ENCODE measurements at regions of chr11 and their contacts with region 1.

Region 1: DNA sequence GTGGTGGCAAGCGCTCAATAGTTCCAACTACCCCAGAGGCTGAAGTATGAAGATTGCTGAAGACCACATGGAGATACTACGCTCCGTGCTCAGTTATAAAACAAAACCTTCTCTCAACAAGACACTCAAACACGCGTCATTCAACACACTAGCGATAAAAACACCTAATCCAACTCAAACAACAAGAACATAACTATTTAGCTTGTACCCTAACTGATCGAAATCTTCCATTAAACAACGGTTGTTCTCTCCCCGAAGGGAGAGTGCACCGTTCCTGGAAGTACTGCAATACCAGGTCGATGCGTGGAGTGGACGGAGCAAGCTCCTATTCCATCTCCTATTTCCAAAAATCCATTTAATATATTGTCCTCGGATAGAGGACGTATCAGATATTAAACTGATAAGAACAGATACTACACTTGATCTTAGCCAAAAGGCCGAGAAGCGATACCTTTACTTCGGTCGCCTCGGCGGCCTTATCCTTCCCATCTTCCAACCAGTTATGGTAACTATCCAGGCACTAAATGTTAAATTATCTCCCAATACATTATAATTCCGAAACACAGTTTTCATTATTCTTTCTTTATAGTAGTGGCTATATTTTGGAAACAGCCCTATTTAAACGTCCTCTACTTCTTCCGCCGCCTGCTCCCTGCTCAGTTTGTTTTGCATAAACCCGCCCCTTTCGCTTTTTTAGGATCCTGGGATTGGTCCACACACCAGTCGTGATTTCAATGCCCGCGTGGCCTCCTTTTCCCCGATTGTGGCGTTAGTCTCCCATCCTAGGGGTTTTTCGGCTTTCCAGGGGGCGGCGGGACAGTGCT is 2.2 kb upstream of the WDR74 start:
- DNase-seq: peak; percentile 98
- ATAC-seq: peak; percentile 78
- H3K4me3 ChIP-seq: peak overlapping the region; percentile 85 to 100 (median 97)
- H3K27ac ChIP-seq: peak overlapping the region; percentile 98
- H3K4me1 ChIP-seq: peaks cover 43% of the 10 kb centered on the region
- H3K27me3 ChIP-seq: no peaks in the 10 kb centered on the region; a peak in 1 of 5 replicates
- CTCF ChIP-seq: peak; percentile 39
- EP300 ChIP-seq: peak in 1 of 2 experiments; percentile 74; a peak in 2 of 4 replicates
- POLR2A ChIP-seq: peak; percentile 99 to 100
- RAD21 ChIP-seq: peak; percentile 82

Region 2: DNA sequence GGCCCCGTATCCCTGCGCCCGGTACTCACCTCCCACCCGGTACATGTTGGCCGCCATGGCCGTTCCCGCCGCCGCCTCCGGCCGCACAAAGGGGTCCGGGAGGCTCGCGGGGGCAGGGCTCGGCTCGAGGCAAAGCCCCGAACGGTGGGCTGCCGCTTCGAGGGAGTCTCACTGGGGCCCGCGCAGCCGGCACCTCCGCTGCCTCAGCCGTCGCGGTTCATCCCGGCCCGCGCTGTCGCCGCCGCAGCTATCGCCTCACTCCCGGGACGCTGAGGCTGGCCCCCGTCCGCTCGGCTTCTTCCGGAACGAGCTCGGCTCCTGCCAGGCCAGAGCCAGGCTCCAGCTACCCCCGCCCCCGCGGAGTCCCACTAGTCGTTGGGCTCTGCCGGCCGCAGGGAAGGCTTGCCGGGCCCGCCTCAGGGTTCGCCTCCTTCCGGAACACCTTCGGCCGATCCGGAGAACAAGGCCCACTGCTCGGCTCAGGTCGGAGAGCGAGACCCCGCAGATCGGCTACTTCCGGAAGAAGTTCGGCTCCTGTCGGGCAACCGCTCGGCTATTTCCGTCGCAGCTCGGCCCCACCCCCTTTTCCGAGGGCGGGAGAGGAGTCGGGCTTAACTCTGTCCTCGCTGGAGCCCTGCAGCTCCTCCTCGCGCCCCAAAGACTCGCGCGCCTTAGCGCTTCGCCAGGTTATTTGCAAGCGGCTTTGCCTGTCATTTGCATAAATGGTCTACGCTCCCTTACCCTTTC is 240.0 kb before region 1 on chr11 and contains the start of gene MTA2:
- CTCF ChIA-PET with region 1: no interaction called
- POLR2A ChIA-PET with region 1: interaction called, 10 read pairs
- in situ Hi-C with region 1: no loop called
- intact Hi-C with region 1: no loop called
- DNase-seq: peak; percentile 94
- ATAC-seq: peak; percentile 93
- H3K4me3 ChIP-seq: peak within 1 kb of the TSS; percentile 91 to 94 (median 94)
- H3K27ac ChIP-seq: peak within 1 kb of the TSS; percentile 88
- H3K4me1 ChIP-seq: peaks cover 43% of the 10 kb centered on the region
- H3K27me3 ChIP-seq: no peaks in the 10 kb centered on the region; a peak in 1 of 5 replicates
- CTCF ChIP-seq: 0 out of 2 replicates have a peak, but pooled peaks have one; percentile 2
- EP300 ChIP-seq: no peak
- POLR2A ChIP-seq: peak in 1 of 2 experiments; percentile 72; a peak in 2 of 4 replicates
- RAD21 ChIP-seq: no peak
- total RNA-seq, gene MTA2: 58.1 and 70.0 TPM in 2 replicates

Region 3: GRCh38 chr11:62678770-62679696 is 162.5 kb before region 1 on chr11 and contains the start of gene UBXN1:
- CTCF ChIA-PET with region 1: no interaction called
- POLR2A ChIA-PET with region 1: interaction called, 19 read pairs
- in situ Hi-C with region 1: no loop called
- intact Hi-C with region 1: no loop called
- DNase-seq: peak; percentile 79
- ATAC-seq: peak; percentile 79
- H3K4me3 ChIP-seq: peak within 1 kb of the TSS; percentile 88 to 98 (median 94)
- H3K27ac ChIP-seq: peak within 1 kb of the TSS; percentile 86
- H3K4me1 ChIP-seq: peaks cover 37% of the 10 kb centered on the region
- H3K27me3 ChIP-seq: no peaks in the 10 kb centered on the region
- CTCF ChIP-seq: no peak
- EP300 ChIP-seq: no peak
- POLR2A ChIP-seq: peak; percentile 72 to 79
- RAD21 ChIP-seq: no peak; the same call in 1 of the 2 replicates
- total RNA-seq, gene UBXN1: 52.4 and 58.9 TPM in 2 replicates

Region 4: GRCh38 chr11:62787005-62787759 is 54.4 kb before region 1 on chr11 and contains the start of gene TMEM179B:
- CTCF ChIA-PET with region 1: no interaction called
- POLR2A ChIA-PET with region 1: interaction called, 201 read pairs
- in situ Hi-C with region 1: no loop called
- intact Hi-C with region 1: loop called (anchors 2 kb)
- DNase-seq: peak; percentile 96
- ATAC-seq: peak; percentile 77
- H3K4me3 ChIP-seq: peak within 1 kb of the TSS; percentile 65 to 88 (median 81)
- H3K27ac ChIP-seq: peak within 1 kb of the TSS; percentile 79
- H3K4me1 ChIP-seq: peaks cover 45% of the 10 kb centered on the region
- H3K27me3 ChIP-seq: no peaks in the 10 kb centered on the region; a peak in 1 of 5 replicates
- CTCF ChIP-seq: peak; percentile 79
- EP300 ChIP-seq: no peak; a peak in 1 of 4 replicates
- POLR2A ChIP-seq: peak; percentile 91 to 98
- RAD21 ChIP-seq: no peak
- total RNA-seq, gene TMEM179B: 11.4 and 24.8 TPM in 2 replicates

Region 5: DNA sequence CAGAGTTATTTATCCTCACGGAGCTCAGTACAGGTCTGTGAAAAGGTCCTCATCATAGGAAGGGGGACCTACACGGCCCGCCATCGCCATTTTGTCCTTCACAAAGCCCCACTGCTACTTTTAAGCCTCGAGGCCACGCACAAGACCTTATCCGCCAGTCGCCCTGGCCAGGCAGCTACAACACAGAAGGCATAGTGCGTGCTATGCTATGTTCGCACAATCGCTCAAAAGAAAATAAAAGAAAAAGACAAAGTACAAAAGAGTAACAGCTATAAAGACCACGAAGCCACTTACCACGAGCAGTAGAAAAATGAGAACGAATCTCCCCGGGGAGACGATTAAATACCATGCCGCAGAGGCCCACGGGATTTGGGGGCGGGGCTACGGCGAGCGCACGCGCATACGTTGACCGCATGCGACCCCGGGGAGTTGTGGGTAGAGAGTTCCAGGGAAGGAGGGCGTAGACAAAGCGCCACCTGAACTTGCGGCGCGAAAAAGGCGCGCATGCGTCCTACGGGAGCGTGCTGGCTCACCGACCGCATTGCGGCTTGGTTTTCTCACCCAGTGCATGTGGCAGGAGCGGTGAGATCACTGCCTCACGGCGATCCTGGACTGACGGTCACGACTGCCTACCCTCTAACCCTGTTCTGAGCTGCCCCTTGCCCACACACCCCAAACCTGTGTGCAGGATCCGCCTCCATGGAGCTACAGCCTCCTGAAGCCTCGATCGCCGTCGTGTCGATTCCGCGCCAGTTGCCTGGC is 14.2 kb after region 1 on chr11:
- CTCF ChIA-PET with region 1: no interaction called
- POLR2A ChIA-PET with region 1: interaction called, 362 read pairs
- in situ Hi-C with region 1: no loop called
- intact Hi-C with region 1: no loop called
- DNase-seq: peak; percentile 97
- ATAC-seq: peak; percentile 79
- H3K4me3 ChIP-seq: peak overlapping the region; percentile 86 to 96 (median 94)
- H3K27ac ChIP-seq: peak overlapping the region; percentile 91
- H3K4me1 ChIP-seq: peaks cover 77% of the 10 kb centered on the region
- H3K27me3 ChIP-seq: no peaks in the 10 kb centered on the region; a peak in 1 of 5 replicates
- CTCF ChIP-seq: peak; percentile 23; the same call in 1 of the 2 replicates
- EP300 ChIP-seq: 0 out of 4 replicates have a peak, but pooled peaks of 1 of the 2 experiments have one; percentile 8
- POLR2A ChIP-seq: peak; percentile 99 to 100
- RAD21 ChIP-seq: peak; percentile 16; the same call in 1 of the 2 replicates

Region 6: DNA sequence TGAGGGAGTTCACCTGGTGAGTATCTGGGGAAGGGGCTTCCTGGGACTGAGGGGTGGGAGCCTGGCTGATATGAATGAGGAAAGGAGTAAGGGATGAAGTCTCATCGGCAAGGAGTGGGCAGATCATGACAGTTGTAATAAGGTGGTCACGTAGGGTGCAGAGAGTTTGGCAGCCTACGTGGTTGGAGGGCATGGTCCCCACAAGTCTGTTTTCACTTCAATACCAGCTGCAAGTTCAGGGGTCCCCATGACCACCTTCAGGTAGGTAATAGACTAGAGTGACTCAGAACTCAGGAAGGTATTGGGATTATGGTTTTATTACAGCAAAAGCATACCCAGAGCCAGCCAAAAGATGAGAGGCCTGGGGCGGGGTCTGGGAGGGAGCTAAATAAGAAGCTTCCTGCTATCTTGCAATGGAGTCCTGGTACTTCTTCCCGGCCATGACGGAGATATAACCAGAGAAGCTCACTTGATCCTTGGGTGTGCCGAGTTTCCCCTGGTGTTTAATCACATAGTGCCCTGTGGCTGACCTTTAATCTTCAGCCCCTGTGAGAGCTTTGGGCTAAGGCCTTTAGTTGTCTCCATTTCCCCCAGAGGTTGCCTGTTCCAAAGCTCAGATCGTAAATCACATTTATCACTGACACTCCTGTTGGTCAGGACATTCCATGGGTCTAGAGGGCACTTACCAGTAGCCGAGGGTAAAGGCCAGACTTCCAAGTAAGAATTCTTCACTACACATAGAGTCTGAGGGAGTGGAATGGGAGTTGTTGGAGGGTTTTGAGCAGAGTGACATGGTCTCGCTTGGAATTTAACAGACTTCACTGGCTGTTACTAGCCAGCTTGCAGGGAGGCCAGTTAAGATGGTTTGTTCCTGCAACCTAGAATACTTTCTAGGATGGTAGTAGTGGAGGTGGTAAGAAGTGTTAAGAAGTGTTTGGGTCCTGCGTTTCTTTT is 48.2 kb after region 1 on chr11:
- CTCF ChIA-PET with region 1: no interaction called
- POLR2A ChIA-PET with region 1: interaction called, 90 read pairs
- in situ Hi-C with region 1: no loop called
- intact Hi-C with region 1: no loop called
- DNase-seq: peak; percentile 79
- ATAC-seq: peak; percentile 59
- H3K4me3 ChIP-seq: no peak overlapping the region
- H3K27ac ChIP-seq: peak overlapping the region; percentile 66
- H3K4me1 ChIP-seq: peaks cover 81% of the 10 kb centered on the region
- H3K27me3 ChIP-seq: no peaks in the 10 kb centered on the region
- CTCF ChIP-seq: no peak
- EP300 ChIP-seq: peak in 1 of 2 experiments; percentile 59; a peak in 1 of 4 replicates
- POLR2A ChIP-seq: peak; percentile 53 to 66; a peak in 3 of 4 replicates
- RAD21 ChIP-seq: no peak; the same call in 1 of the 2 replicates

Region 7: GRCh38 chr11:63032457-63032856 is 190.9 kb after region 1 on chr11:
- CTCF ChIA-PET with region 1: no interaction called
- POLR2A ChIA-PET with region 1: no interaction called
- in situ Hi-C with region 1: no loop called
- intact Hi-C with region 1: no loop called
- DNase-seq: no peak
- ATAC-seq: no peak
- H3K4me3 ChIP-seq: no peak overlapping the region
- H3K27ac ChIP-seq: no peak overlapping the region
- H3K4me1 ChIP-seq: peaks cover 7% of the 10 kb centered on the region; the same call in 1 of the 2 replicates
- H3K27me3 ChIP-seq: no peaks in the 10 kb centered on the region
- CTCF ChIP-seq: no peak
- EP300 ChIP-seq: no peak
- POLR2A ChIP-seq: no peak
- RAD21 ChIP-seq: no peak

Region 8: GRCh38 chr11:63427971-63428508 is 586.5 kb after region 1 on chr11:
- CTCF ChIA-PET with region 1: no interaction called
- POLR2A ChIA-PET with region 1: no interaction called
- in situ Hi-C with region 1: no loop called
- intact Hi-C with region 1: no loop called
- DNase-seq: peak; percentile 13
- ATAC-seq: peak; percentile 67
- H3K4me3 ChIP-seq: no peak overlapping the region
- H3K27ac ChIP-seq: no peak overlapping the region
- H3K4me1 ChIP-seq: peaks cover 10% of the 10 kb centered on the region; the same call in 1 of the 2 replicates
- H3K27me3 ChIP-seq: no peaks in the 10 kb centered on the region
- CTCF ChIP-seq: peak; percentile 35
- EP300 ChIP-seq: no peak
- POLR2A ChIP-seq: no peak
- RAD21 ChIP-seq: no peak